CD14-positive monocyte (primary cell): ENCODE measurements at regions of chr21 and their contacts with region 1.

Region 1: GRCh38 chr21:21415741-21416140 is 417.5 kb downstream of the NCAM2 start:
- DNase-seq: no peak
- H3K4me3 ChIP-seq: no peak overlapping the region
- H3K4me3 Mint-ChIP-seq: no peak overlapping the region
- H3K27ac ChIP-seq: no peak overlapping the region
- H3K27ac Mint-ChIP-seq: no peak overlapping the region
- H3K4me1 ChIP-seq: no peaks in the 10 kb centered on the region
- H3K4me1 Mint-ChIP-seq: no peaks in the 10 kb centered on the region
- H3K27me3 ChIP-seq: no peaks in the 10 kb centered on the region
- H3K27me3 Mint-ChIP-seq: peaks cover 0 to 2% (median 2%) of the 10 kb centered on the region in 3 donors
- CTCF ChIP-seq: no peak

Region 2: DNA sequence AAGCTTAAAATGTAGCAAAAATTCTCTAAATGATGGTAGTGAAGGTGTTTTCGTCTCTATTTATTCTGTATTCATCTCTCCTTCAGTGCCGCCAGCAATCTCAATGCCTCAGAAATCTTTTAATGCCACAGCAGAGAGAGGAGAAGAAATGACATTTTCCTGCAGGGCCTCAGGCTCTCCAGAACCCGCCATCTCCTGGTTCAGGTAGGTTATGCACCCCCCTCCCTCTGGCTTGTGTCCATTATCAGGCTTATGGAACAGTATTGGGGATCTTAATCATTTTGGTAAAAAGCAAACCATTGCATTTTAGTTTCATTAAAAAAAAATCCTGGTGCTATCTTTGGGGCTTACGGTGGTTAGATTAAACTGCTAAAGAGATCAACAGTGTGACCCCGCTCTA is 91.4 kb before region 1 on chr21:
- intact Hi-C with region 1: no loop called
- DNase-seq: no peak
- H3K4me3 ChIP-seq: no peak overlapping the region
- H3K4me3 Mint-ChIP-seq: no peak overlapping the region
- H3K27ac ChIP-seq: no peak overlapping the region
- H3K27ac Mint-ChIP-seq: no peak overlapping the region
- H3K4me1 ChIP-seq: no peaks in the 10 kb centered on the region
- H3K4me1 Mint-ChIP-seq: no peaks in the 10 kb centered on the region
- H3K27me3 ChIP-seq: no peaks in the 10 kb centered on the region
- H3K27me3 Mint-ChIP-seq: peaks cover 0 to 2% (median 0%) of the 10 kb centered on the region in 3 donors
- CTCF ChIP-seq: no peak

Region 3: GRCh38 chr21:21434944-21435343 is 19.2 kb after region 1 on chr21:
- intact Hi-C with region 1: loop called in 1 of 2 experiments (anchors 2 kb)
- DNase-seq: no peak
- H3K4me3 ChIP-seq: no peak overlapping the region
- H3K4me3 Mint-ChIP-seq: no peak overlapping the region
- H3K27ac ChIP-seq: no peak overlapping the region
- H3K27ac Mint-ChIP-seq: no peak overlapping the region
- H3K4me1 ChIP-seq: no peaks in the 10 kb centered on the region
- H3K4me1 Mint-ChIP-seq: no peaks in the 10 kb centered on the region
- H3K27me3 ChIP-seq: no peaks in the 10 kb centered on the region
- H3K27me3 Mint-ChIP-seq: peaks cover 0 to 2% (median 1%) of the 10 kb centered on the region in 3 donors
- CTCF ChIP-seq: no peak